Naive thymus-derived CD4-positive, alpha-beta T cell (primary cell): ENCODE measurements at regions of chr15 and their contacts with region 1.

Region 1: GRCh38 chr15:38563723-38564519 is 693 bp downstream of the RASGRP1 start:
- DNase-seq: peak; percentile 75 to 95 (median 86)
- ATAC-seq: peak; percentile 85
- H3K4me3 ChIP-seq: peak overlapping the region; percentile 98
- H3K4me3 Mint-ChIP-seq: peak overlapping the region; percentile 80 to 99 (median 95)
- H3K27ac ChIP-seq: peak overlapping the region; percentile 91
- H3K27ac Mint-ChIP-seq: peak overlapping the region; percentile 87 to 99 (median 94)
- H3K4me1 ChIP-seq: peaks cover 51 to 60% of the 10 kb centered on the region in 2 donors
- H3K4me1 Mint-ChIP-seq: peaks cover 36 to 67% (median 64%) of the 10 kb centered on the region in 7 donors
- H3K27me3 ChIP-seq: no peaks in the 10 kb centered on the region
- H3K27me3 Mint-ChIP-seq: no peaks in the 10 kb centered on the region

Region 2: DNA sequence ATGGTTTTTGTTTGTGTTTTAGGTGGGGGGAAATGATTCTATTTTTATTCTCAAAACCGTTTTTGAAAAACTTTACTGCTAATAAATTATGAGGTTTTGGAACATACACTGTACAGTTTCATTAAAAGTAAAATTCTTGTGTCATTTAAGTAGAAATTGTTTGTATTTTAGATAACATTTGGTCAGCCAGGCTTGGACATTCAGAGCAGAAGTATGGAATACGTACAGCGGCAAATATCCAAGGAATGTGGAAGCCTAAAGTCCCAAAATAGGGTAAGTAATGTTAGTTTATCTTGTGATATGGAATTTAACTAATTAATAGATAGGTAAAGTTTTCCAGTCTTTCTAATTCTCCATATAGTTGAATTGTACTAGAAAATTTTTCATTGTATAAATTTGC is 214.7 kb before region 1 on chr15:
- CTCF ChIA-PET with region 1: no interaction called
- POLR2A ChIA-PET with region 1: no interaction called
- intact Hi-C with region 1: no loop called
- DNase-seq: no peak
- ATAC-seq: no peak
- H3K4me3 ChIP-seq: no peak overlapping the region
- H3K4me3 Mint-ChIP-seq: no peak overlapping the region
- H3K27ac ChIP-seq: no peak overlapping the region
- H3K27ac Mint-ChIP-seq: no peak overlapping the region
- H3K4me1 ChIP-seq: no peaks in the 10 kb centered on the region
- H3K4me1 Mint-ChIP-seq: no peaks in the 10 kb centered on the region
- H3K27me3 ChIP-seq: no peaks in the 10 kb centered on the region
- H3K27me3 Mint-ChIP-seq: peaks cover 0 to 27% (median 13%) of the 10 kb centered on the region in 5 donors

Region 3: GRCh38 chr15:38474155-38474757 is 89.7 kb before region 1 on chr15:
- CTCF ChIA-PET with region 1: interaction called, 9 read pairs
- POLR2A ChIA-PET with region 1: interaction called, 5 read pairs
- intact Hi-C with region 1: loop called (anchors 1 to 5 kb)
- DNase-seq: peak in 7 of 9 donors; percentile 53 to 75 (median 62)
- ATAC-seq: peak; percentile 100
- H3K4me3 ChIP-seq: no peak overlapping the region
- H3K4me3 Mint-ChIP-seq: peak overlapping the region in 2 of 10 donors; percentile 4 to 10
- H3K27ac ChIP-seq: no peak overlapping the region
- H3K27ac Mint-ChIP-seq: peak overlapping the region; percentile 10 to 88 (median 81)
- H3K4me1 ChIP-seq: peaks cover 0 to 5% of the 10 kb centered on the region in 2 donors
- H3K4me1 Mint-ChIP-seq: peaks cover 10 to 23% (median 13%) of the 10 kb centered on the region in 7 donors
- H3K27me3 ChIP-seq: no peaks in the 10 kb centered on the region
- H3K27me3 Mint-ChIP-seq: no peaks in the 10 kb centered on the region

Region 4: GRCh38 chr15:38531509-38531908 is 32.4 kb before region 1 on chr15:
- CTCF ChIA-PET with region 1: interaction called, 6 read pairs
- POLR2A ChIA-PET with region 1: interaction called, 10 read pairs
- intact Hi-C with region 1: no loop called
- DNase-seq: no peak
- ATAC-seq: no peak
- H3K4me3 ChIP-seq: no peak overlapping the region
- H3K4me3 Mint-ChIP-seq: peak overlapping the region in 7 of 10 donors; percentile 1 to 58 (median 44)
- H3K27ac ChIP-seq: no peak overlapping the region
- H3K27ac Mint-ChIP-seq: peak overlapping the region in 8 of 9 donors; percentile 42 to 95 (median 78)
- H3K4me1 ChIP-seq: peaks cover 58 to 64% of the 10 kb centered on the region in 2 donors
- H3K4me1 Mint-ChIP-seq: peaks cover 67 to 99% (median 97%) of the 10 kb centered on the region in 7 donors
- H3K27me3 ChIP-seq: no peaks in the 10 kb centered on the region
- H3K27me3 Mint-ChIP-seq: no peaks in the 10 kb centered on the region

Region 5: GRCh38 chr15:38610748-38611147 is 46.8 kb after region 1 on chr15:
- CTCF ChIA-PET with region 1: interaction called, 3 read pairs
- POLR2A ChIA-PET with region 1: interaction called, 3 read pairs
- intact Hi-C with region 1: loop called in 1 of 2 experiments (anchors 1 kb)
- DNase-seq: peak in 8 of 9 donors; percentile 31 to 76 (median 54)
- ATAC-seq: peak; percentile 80
- H3K4me3 ChIP-seq: peak overlapping the region; percentile 2
- H3K4me3 Mint-ChIP-seq: peak overlapping the region; percentile 10 to 79 (median 40)
- H3K27ac ChIP-seq: peak overlapping the region; percentile 57
- H3K27ac Mint-ChIP-seq: peak overlapping the region; percentile 78 to 96 (median 88)
- H3K4me1 ChIP-seq: peaks cover 25 to 43% of the 10 kb centered on the region in 2 donors
- H3K4me1 Mint-ChIP-seq: peaks cover 28 to 75% (median 54%) of the 10 kb centered on the region in 7 donors
- H3K27me3 ChIP-seq: no peaks in the 10 kb centered on the region
- H3K27me3 Mint-ChIP-seq: no peaks in the 10 kb centered on the region

Region 6: GRCh38 chr15:38660738-38661137 is 96.8 kb after region 1 on chr15:
- CTCF ChIA-PET with region 1: interaction called, 7 read pairs
- POLR2A ChIA-PET with region 1: interaction called, 245 read pairs
- intact Hi-C with region 1: no loop called
- DNase-seq: peak in 2 of 9 donors; percentile 27 to 29
- ATAC-seq: peak; percentile 65
- H3K4me3 ChIP-seq: no peak overlapping the region
- H3K4me3 Mint-ChIP-seq: peak overlapping the region; percentile 5 to 84 (median 70)
- H3K27ac ChIP-seq: peak overlapping the region; percentile 56
- H3K27ac Mint-ChIP-seq: peak overlapping the region; percentile 56 to 94 (median 88)
- H3K4me1 ChIP-seq: peaks cover 17 to 53% of the 10 kb centered on the region in 2 donors
- H3K4me1 Mint-ChIP-seq: peaks cover 50 to 94% (median 83%) of the 10 kb centered on the region in 7 donors
- H3K27me3 ChIP-seq: no peaks in the 10 kb centered on the region
- H3K27me3 Mint-ChIP-seq: no peaks in the 10 kb centered on the region

Region 7: GRCh38 chr15:38690689-38691332 is 126.9 kb after region 1 on chr15:
- CTCF ChIA-PET with region 1: interaction called, 295 read pairs
- POLR2A ChIA-PET with region 1: interaction called, 260 read pairs
- intact Hi-C with region 1: loop called in 1 of 2 experiments (anchors 1 kb)
- DNase-seq: peak; percentile 60 to 87 (median 80)
- ATAC-seq: peak; percentile 68
- H3K4me3 ChIP-seq: no peak overlapping the region
- H3K4me3 Mint-ChIP-seq: peak overlapping the region in 7 of 10 donors; percentile 46 to 73 (median 69)
- H3K27ac ChIP-seq: peak overlapping the region; percentile 44
- H3K27ac Mint-ChIP-seq: peak overlapping the region; percentile 18 to 99 (median 95)
- H3K4me1 ChIP-seq: peaks cover 53 to 63% of the 10 kb centered on the region in 2 donors
- H3K4me1 Mint-ChIP-seq: peaks cover 49 to 87% (median 67%) of the 10 kb centered on the region in 7 donors
- H3K27me3 ChIP-seq: no peaks in the 10 kb centered on the region
- H3K27me3 Mint-ChIP-seq: no peaks in the 10 kb centered on the region